T-cell (primary cell): ENCODE measurements at regions of chr1 and their contacts with region 1.

Region 1: GRCh38 chr1:188281921-188282320 is 1453.2 kb downstream of the PLA2G4A start:
- DNase-seq: no peak
- ATAC-seq: no peak
- H3K4me3 ChIP-seq: no peak overlapping the region
- H3K4me3 Mint-ChIP-seq: no peak overlapping the region
- H3K27ac ChIP-seq: no peak overlapping the region
- H3K27ac Mint-ChIP-seq: no peak overlapping the region
- H3K4me1 ChIP-seq: no peaks in the 10 kb centered on the region
- H3K4me1 Mint-ChIP-seq: no peaks in the 10 kb centered on the region
- H3K27me3 ChIP-seq: no peaks in the 10 kb centered on the region
- H3K27me3 Mint-ChIP-seq: no peaks in the 10 kb centered on the region

Region 2: DNA sequence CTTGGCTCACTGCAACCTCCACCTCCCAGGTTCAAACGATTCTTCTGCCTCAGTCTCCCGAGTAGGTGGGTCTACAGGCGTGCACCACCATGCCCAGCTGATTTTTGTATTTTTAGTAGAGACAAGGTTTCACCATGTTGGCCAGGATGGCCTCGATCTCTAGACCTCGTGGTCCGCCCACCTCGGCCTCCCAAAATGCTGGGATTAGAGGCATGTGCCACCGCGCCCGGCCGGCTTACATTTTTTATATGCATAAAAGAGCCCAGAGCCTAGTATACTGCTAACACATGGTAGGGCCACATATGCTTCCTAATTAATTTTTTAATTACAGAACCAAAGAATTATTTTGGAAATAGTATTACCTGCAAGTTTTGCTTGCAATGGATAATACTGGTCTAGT is 127.7 kb before region 1 on chr1:
- CTCF ChIA-PET with region 1: no interaction called
- POLR2A ChIA-PET with region 1: interaction called in 1 of 2 experiments, 10 read pairs
- DNase-seq: no peak
- ATAC-seq: no peak
- H3K4me3 ChIP-seq: no peak overlapping the region
- H3K4me3 Mint-ChIP-seq: no peak overlapping the region
- H3K27ac ChIP-seq: no peak overlapping the region
- H3K27ac Mint-ChIP-seq: no peak overlapping the region
- H3K4me1 ChIP-seq: no peaks in the 10 kb centered on the region
- H3K4me1 Mint-ChIP-seq: no peaks in the 10 kb centered on the region
- H3K27me3 ChIP-seq: no peaks in the 10 kb centered on the region
- H3K27me3 Mint-ChIP-seq: no peaks in the 10 kb centered on the region

Region 3: DNA sequence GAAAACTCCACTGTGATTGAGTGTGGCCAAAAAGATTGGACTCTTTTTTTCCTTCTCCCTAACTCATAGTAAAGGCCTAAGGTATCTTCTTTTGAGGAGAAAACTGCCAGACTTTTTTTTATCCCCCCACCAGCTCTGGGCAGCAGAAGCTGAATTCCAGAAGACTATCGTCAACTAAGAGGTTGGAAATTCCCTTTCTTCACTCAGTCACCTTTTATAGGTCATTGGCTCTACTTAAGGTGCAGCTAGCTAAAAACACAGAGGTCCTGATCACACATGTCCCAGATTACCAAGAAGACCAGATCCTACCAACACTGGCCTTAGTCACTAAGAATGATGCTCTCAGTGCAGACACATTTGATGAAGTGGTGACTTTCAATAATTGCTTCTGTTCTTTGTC is 12.0 kb before region 1 on chr1:
- CTCF ChIA-PET with region 1: no interaction called
- POLR2A ChIA-PET with region 1: no interaction called
- DNase-seq: no peak
- ATAC-seq: no peak
- H3K4me3 ChIP-seq: no peak overlapping the region
- H3K4me3 Mint-ChIP-seq: no peak overlapping the region
- H3K27ac ChIP-seq: no peak overlapping the region
- H3K27ac Mint-ChIP-seq: no peak overlapping the region
- H3K4me1 ChIP-seq: no peaks in the 10 kb centered on the region
- H3K4me1 Mint-ChIP-seq: no peaks in the 10 kb centered on the region
- H3K27me3 ChIP-seq: no peaks in the 10 kb centered on the region
- H3K27me3 Mint-ChIP-seq: no peaks in the 10 kb centered on the region

Region 4: GRCh38 chr1:188343914-188344313 is 62.0 kb after region 1 on chr1:
- CTCF ChIA-PET with region 1: no interaction called
- POLR2A ChIA-PET with region 1: no interaction called
- DNase-seq: no peak
- ATAC-seq: no peak
- H3K4me3 ChIP-seq: no peak overlapping the region
- H3K4me3 Mint-ChIP-seq: no peak overlapping the region
- H3K27ac ChIP-seq: no peak overlapping the region
- H3K27ac Mint-ChIP-seq: no peak overlapping the region
- H3K4me1 ChIP-seq: no peaks in the 10 kb centered on the region
- H3K4me1 Mint-ChIP-seq: no peaks in the 10 kb centered on the region
- H3K27me3 ChIP-seq: no peaks in the 10 kb centered on the region
- H3K27me3 Mint-ChIP-seq: no peaks in the 10 kb centered on the region

Region 5: GRCh38 chr1:188372832-188373231 is 90.9 kb after region 1 on chr1:
- CTCF ChIA-PET with region 1: no interaction called
- POLR2A ChIA-PET with region 1: no interaction called
- DNase-seq: no peak
- ATAC-seq: no peak
- H3K4me3 ChIP-seq: no peak overlapping the region
- H3K4me3 Mint-ChIP-seq: no peak overlapping the region
- H3K27ac ChIP-seq: no peak overlapping the region
- H3K27ac Mint-ChIP-seq: no peak overlapping the region
- H3K4me1 ChIP-seq: no peaks in the 10 kb centered on the region
- H3K4me1 Mint-ChIP-seq: no peaks in the 10 kb centered on the region
- H3K27me3 ChIP-seq: no peaks in the 10 kb centered on the region
- H3K27me3 Mint-ChIP-seq: no peaks in the 10 kb centered on the region

Region 6: DNA sequence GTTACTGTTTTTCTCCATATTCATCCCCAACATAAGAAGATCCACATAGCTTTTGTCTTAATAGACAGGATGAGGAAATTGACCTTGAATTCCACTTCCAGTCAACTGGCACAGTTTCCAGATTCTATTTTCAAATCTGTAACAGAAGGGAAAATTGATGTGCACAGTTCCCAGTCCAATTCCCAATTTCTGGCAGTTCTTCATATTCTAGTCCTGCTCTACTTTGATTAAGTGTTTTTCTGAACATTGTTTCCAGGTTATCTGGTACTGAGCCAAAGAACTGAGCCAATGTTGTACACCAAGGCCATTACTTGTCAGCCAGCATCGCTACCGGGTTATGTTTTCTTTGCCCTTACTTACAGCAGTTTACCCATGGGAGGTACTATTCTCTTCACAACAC is 302.2 kb after region 1 on chr1:
- CTCF ChIA-PET with region 1: no interaction called
- POLR2A ChIA-PET with region 1: no interaction called
- DNase-seq: no peak
- ATAC-seq: no peak
- H3K4me3 ChIP-seq: no peak overlapping the region
- H3K4me3 Mint-ChIP-seq: no peak overlapping the region
- H3K27ac ChIP-seq: no peak overlapping the region
- H3K27ac Mint-ChIP-seq: no peak overlapping the region
- H3K4me1 ChIP-seq: no peaks in the 10 kb centered on the region
- H3K4me1 Mint-ChIP-seq: no peaks in the 10 kb centered on the region
- H3K27me3 ChIP-seq: no peaks in the 10 kb centered on the region
- H3K27me3 Mint-ChIP-seq: no peaks in the 10 kb centered on the region